ENCODE measurements at regions of chr1 and their contacts with region 1.

Region 1: GRCh38 chr1:109816175-109816811 is 52.6 kb upstream of the EPS8L3 start:
- H3K4me3 Mint-ChIP-seq: no peak overlapping the region
- H3K27ac Mint-ChIP-seq: no peak overlapping the region
- H3K4me1 Mint-ChIP-seq: peaks cover 66% of the 10 kb centered on the region
- H3K27me3 Mint-ChIP-seq: peaks cover 42% of the 10 kb centered on the region

Region 2: DNA sequence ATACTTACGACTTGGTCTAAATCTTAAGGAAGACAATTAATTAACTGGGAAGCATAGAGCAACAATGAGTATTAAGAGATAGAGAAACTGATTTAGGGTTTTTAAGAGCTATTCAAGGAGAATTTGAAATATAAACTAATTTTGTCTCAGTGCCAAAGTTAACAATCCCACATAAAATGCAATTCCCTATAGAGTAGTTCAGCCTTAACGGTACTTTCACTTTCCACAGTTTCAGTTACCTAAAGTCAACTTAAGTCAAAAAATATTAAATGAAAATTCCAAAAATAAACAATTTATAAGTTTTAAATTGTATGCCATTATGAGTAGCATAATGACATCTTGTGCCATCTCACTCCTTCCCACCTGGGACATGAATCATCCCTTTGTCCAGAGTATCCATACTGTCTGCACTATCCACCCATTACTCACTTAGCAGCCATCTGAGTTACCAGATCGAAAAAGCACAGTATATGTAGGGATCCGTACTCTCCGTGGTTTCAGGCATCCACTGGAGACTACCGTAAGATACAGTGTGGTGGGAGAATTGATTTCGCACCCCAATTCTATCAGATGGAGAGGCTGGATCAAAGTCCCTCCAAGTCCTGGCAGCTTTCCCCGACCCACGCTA is 607.3 kb before region 1 on chr1:
- intact Hi-C with region 1: no loop called
- H3K4me3 Mint-ChIP-seq: no peak overlapping the region
- H3K27ac Mint-ChIP-seq: no peak overlapping the region
- H3K4me1 Mint-ChIP-seq: peaks cover 28% of the 10 kb centered on the region
- H3K27me3 Mint-ChIP-seq: peaks cover 10% of the 10 kb centered on the region

Region 3: DNA sequence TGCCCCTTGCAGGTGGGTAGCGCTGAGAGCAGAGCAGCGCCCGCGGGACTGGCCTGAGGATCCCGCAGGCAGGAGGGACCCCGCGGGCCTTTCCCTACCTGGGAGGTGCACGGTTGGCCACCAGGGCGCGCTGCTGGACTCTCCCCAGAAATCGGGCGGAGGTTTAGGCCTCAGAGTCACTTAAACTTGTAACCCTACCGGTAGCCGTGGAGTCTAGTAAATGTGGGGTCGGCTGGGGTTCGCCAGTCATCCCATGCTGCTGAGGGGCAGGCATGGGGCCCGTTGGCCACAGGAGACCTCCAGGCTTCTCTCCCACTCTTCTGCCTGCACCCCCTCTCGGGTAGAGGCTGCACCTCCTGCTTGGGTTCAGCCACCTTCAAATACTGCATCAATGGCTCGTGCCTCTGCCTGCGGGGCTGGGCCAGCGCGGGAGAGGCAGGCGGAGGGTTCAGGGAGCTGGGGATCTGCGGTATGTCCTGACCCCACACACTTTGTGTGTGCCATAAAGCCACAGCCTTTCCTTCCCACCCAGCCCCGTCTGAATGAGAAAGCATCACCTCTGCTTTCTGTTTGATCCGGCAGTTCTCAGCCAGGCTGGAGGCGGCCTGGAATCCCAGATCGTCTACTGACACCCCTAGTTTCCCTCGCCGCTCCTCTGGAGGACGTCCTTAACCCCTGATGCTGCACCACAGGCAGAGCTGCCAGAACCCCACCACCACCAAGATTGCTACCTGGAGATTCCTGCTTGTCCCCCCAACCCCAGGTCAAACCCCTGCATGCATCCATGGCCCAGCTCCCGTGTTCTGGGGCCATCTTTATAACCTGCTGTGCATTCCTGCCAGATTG is 172.7 kb before region 1 on chr1:
- intact Hi-C with region 1: no loop called
- H3K4me3 Mint-ChIP-seq: no peak overlapping the region
- H3K27ac Mint-ChIP-seq: no peak overlapping the region
- H3K4me1 Mint-ChIP-seq: peaks cover 18% of the 10 kb centered on the region
- H3K27me3 Mint-ChIP-seq: peaks cover 5% of the 10 kb centered on the region

Region 4: DNA sequence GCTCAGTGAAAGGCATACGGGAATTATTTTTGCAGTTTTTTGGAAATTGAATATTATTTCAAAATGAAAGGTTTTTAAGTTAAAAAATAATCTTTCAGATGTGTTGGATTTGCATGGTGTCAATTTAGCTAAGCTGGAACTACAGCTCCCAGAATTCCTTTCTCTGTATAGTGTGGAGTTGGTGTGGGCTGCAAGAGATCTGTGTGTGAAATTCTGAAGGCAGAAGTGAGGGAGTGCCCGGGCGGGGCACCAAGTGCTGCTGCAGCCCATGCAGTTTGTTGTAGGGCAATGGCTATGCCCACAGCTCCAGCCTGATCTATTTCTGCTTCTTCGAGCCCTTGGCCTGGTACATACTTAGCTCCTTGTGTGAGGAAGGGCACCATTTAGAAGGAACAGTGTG is 33.9 kb after region 1 on chr1:
- intact Hi-C with region 1: no loop called
- H3K4me3 Mint-ChIP-seq: no peak overlapping the region
- H3K27ac Mint-ChIP-seq: no peak overlapping the region
- H3K4me1 Mint-ChIP-seq: peaks cover 9% of the 10 kb centered on the region
- H3K27me3 Mint-ChIP-seq: peaks cover 13% of the 10 kb centered on the region

Region 5: GRCh38 chr1:109864047-109864822 is 47.9 kb after region 1 on chr1:
- intact Hi-C with region 1: loop called (anchors 10 kb)
- H3K4me3 Mint-ChIP-seq: no peak overlapping the region
- H3K27ac Mint-ChIP-seq: no peak overlapping the region
- H3K4me1 Mint-ChIP-seq: peaks cover 15% of the 10 kb centered on the region
- H3K27me3 Mint-ChIP-seq: peaks cover 11% of the 10 kb centered on the region

Region 6: DNA sequence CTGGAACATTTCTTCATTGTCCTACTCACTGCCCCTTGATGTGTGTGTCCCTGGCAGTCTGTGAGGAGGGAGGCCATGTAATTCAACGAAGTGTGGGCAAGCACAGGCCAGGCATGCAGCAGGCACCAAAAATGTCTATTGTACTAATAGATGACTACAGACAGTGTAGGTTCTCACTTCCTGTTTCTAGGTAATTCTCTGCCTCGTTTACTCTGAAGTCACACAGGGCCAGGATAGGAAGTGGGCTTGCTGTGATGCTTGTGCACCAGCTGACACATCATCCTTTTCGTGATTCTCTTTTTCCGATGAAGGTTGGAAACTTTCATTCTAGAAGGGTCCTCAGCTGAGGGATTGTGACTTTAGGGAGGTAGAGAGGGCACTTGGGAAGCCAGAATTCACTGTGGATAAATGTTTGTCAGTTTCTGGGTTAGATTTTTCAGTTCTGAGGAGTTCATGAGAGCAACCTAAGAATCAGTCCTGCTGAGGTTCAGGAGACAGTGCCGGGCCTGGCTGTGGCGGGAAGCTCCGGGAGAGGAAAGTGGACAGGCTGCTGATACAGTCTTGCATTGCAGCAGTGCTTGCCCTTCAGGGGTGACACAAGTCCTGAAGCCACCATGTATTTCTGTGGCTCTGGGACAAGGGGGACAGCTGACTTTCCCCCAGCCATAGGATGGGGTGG is 90.0 kb after region 1 on chr1:
- intact Hi-C with region 1: loop called (anchors 5 kb)
- H3K4me3 Mint-ChIP-seq: no peak overlapping the region
- H3K27ac Mint-ChIP-seq: peak overlapping the region; percentile 77
- H3K4me1 Mint-ChIP-seq: peaks cover 61% of the 10 kb centered on the region
- H3K27me3 Mint-ChIP-seq: peaks cover 60% of the 10 kb centered on the region

Region 7: GRCh38 chr1:110319332-110320152 is 503.2 kb after region 1 on chr1:
- intact Hi-C with region 1: no loop called
- H3K4me3 Mint-ChIP-seq: no peak overlapping the region
- H3K27ac Mint-ChIP-seq: no peak overlapping the region
- H3K4me1 Mint-ChIP-seq: peaks cover 5% of the 10 kb centered on the region
- H3K27me3 Mint-ChIP-seq: no peaks in the 10 kb centered on the region

Measured in dendritic cell treated with granulocyte-macrophage colony-stimulating factor and Interleukin-4, amounts not matched to agents 40 ng/mL and 50 ng/mL, for 4 days (primary cell).